Naive thymus-derived CD4-positive, alpha-beta T cell (primary cell): ENCODE measurements at regions of chr5 and their contacts with region 1.

Region 1: DNA sequence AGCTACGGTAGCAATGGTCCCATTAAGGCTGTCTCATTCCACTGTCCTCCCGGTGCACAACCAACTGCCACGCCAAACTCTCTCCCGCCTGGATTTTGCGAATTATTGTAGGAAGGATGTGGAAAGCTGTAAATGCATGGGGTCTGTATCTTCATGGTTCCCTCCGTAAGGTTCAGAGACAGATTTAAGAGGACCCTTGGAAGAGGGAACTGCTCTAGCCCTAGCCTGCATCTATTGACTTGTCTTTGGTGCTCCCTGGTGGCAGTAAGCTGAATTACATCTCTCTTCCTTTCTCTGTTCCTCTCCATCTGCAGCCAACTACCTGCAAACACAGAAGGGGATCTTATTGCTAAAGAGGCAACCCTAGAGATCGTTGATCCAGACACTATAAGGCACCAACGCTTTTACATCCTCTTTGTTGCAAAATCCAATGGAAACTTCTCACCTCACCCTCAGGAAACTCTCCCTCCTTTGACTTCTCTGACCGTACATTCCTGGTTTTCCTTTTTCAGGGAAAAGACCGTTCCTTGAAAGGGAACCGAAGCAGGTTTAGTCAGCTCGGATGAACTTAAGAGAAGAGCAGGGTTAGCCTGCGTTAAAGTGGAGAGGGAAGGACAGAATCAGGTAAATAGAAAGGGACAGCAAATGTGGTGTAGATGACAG is 11.9 kb downstream of the CAPSL start:
- DNase-seq: peak; percentile 29 to 80 (median 73)
- ATAC-seq: peak; percentile 70
- H3K4me3 ChIP-seq: no peak overlapping the region
- H3K4me3 Mint-ChIP-seq: peak overlapping the region; percentile 35 to 87 (median 58)
- H3K27ac ChIP-seq: no peak overlapping the region
- H3K27ac Mint-ChIP-seq: peak overlapping the region in 3 of 9 donors; percentile 1 to 60 (median 7)
- H3K4me1 ChIP-seq: peaks cover 10 to 14% of the 10 kb centered on the region in 2 donors
- H3K4me1 Mint-ChIP-seq: peaks cover 18 to 49% (median 35%) of the 10 kb centered on the region in 7 donors
- H3K27me3 ChIP-seq: no peaks in the 10 kb centered on the region
- H3K27me3 Mint-ChIP-seq: peaks cover 0 to 13% (median 5%) of the 10 kb centered on the region in 5 donors

Region 2: DNA sequence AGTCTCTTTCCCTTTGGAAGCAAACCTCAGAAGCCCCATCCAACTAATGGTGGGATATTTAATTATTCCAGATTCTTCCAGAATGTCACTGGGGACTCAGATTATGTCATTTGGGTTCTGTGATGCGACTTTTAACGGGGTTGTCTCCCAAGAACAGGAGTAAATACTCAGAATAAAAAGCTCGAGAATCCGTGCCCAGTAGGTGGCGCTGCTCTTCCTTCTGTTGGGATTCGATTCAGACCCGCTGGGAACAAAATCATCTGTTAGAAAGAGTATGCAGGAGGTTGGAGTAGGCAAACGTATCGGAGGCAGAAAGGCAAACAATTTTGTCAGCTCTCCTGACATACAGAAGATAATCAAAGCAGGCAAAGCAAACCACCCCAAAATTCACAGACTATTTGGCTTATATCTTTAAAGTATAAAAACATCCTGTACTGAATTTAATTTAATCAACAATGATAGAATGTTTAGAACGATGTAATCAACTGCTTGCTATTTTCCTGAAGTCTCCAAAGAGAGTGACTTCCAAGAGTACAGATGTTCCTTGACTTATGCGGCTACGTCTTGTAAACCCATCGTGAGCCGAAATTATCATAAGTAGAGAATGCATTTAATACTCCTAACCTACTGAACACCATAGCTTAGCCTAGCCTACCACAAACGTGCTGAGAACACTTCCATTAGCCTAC is 1440.2 kb before region 1 on chr5:
- CTCF ChIA-PET with region 1: no interaction called
- POLR2A ChIA-PET with region 1: no interaction called
- intact Hi-C with region 1: loop called in 1 of 2 experiments (anchors 5 kb)
- DNase-seq: peak; percentile 10 to 61 (median 47)
- ATAC-seq: peak; percentile 63
- H3K4me3 ChIP-seq: no peak overlapping the region
- H3K4me3 Mint-ChIP-seq: no peak overlapping the region
- H3K27ac ChIP-seq: no peak overlapping the region
- H3K27ac Mint-ChIP-seq: no peak overlapping the region
- H3K4me1 ChIP-seq: no peaks in the 10 kb centered on the region
- H3K4me1 Mint-ChIP-seq: peaks cover 0 to 6% (median 4%) of the 10 kb centered on the region in 7 donors
- H3K27me3 ChIP-seq: no peaks in the 10 kb centered on the region
- H3K27me3 Mint-ChIP-seq: peaks cover 15 to 37% (median 33%) of the 10 kb centered on the region in 5 donors

Region 3: GRCh38 chr5:35229076-35230037 is 697.2 kb before region 1 on chr5:
- CTCF ChIA-PET with region 1: no interaction called
- POLR2A ChIA-PET with region 1: no interaction called
- intact Hi-C with region 1: loop called in 1 of 2 experiments (anchors 5 kb)
- DNase-seq: peak in 1 of 9 donors; percentile 11
- ATAC-seq: peak; percentile 29
- H3K4me3 ChIP-seq: no peak overlapping the region
- H3K4me3 Mint-ChIP-seq: peak overlapping the region; percentile 39 to 83 (median 76)
- H3K27ac ChIP-seq: no peak overlapping the region
- H3K27ac Mint-ChIP-seq: peak overlapping the region in 1 of 9 donors; percentile 20
- H3K4me1 ChIP-seq: no peaks in the 10 kb centered on the region
- H3K4me1 Mint-ChIP-seq: peaks cover 2 to 20% (median 14%) of the 10 kb centered on the region in 7 donors
- H3K27me3 ChIP-seq: peaks cover 5 to 10% of the 10 kb centered on the region in 2 donors
- H3K27me3 Mint-ChIP-seq: peaks cover 71 to 84% (median 81%) of the 10 kb centered on the region in 5 donors

Region 4: GRCh38 chr5:35617435-35618303 is 308.9 kb before region 1 on chr5 and contains the start of gene SPEF2:
- CTCF ChIA-PET with region 1: interaction called, 23 read pairs
- POLR2A ChIA-PET with region 1: no interaction called
- intact Hi-C with region 1: loop called (anchors 1 kb)
- DNase-seq: peak; percentile 57 to 76 (median 71)
- ATAC-seq: peak; percentile 95
- H3K4me3 ChIP-seq: peak within 1 kb of the TSS; percentile 95
- H3K4me3 Mint-ChIP-seq: peak within 1 kb of the TSS; percentile 91 to 96 (median 94)
- H3K27ac ChIP-seq: peak within 1 kb of the TSS; percentile 27
- H3K27ac Mint-ChIP-seq: peak within 1 kb of the TSS; percentile 79 to 96 (median 89)
- H3K4me1 ChIP-seq: peaks cover 4 to 12% of the 10 kb centered on the region in 2 donors
- H3K4me1 Mint-ChIP-seq: peaks cover 14 to 34% (median 26%) of the 10 kb centered on the region in 7 donors
- H3K27me3 ChIP-seq: no peaks in the 10 kb centered on the region
- H3K27me3 Mint-ChIP-seq: no peaks in the 10 kb centered on the region
- total RNA-seq, gene SPEF2: 7.1 to 13.5 (median 9.9) TPM

Region 5: DNA sequence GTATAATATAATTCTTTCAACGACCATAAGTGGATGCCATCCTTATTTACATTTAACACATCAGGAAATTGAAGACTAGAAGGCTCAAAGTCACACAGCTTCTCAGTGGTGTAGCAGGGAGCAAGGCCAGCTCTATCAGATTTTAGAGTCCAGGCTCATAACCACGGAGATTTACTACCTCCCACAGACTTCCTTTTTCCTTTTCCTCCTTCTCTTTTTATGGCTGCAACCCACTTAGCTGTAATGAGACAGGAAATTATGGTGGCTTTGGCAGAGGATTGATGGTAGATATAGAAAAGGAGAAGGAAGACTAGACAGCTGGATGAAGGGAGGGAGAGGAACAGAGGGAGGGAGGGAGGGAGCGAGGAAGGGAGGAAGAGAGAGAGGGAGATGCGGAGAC is 261.4 kb before region 1 on chr5:
- CTCF ChIA-PET with region 1: interaction called, 78 read pairs
- POLR2A ChIA-PET with region 1: no interaction called
- intact Hi-C with region 1: no loop called
- DNase-seq: no peak
- ATAC-seq: peak; percentile 36
- H3K4me3 ChIP-seq: no peak overlapping the region
- H3K4me3 Mint-ChIP-seq: peak overlapping the region in 9 of 10 donors; percentile 3 to 52 (median 37)
- H3K27ac ChIP-seq: no peak overlapping the region
- H3K27ac Mint-ChIP-seq: peak overlapping the region in 8 of 9 donors; percentile 4 to 88 (median 52)
- H3K4me1 ChIP-seq: peaks cover 1 to 23% of the 10 kb centered on the region in 2 donors
- H3K4me1 Mint-ChIP-seq: peaks cover 17 to 70% (median 46%) of the 10 kb centered on the region in 7 donors
- H3K27me3 ChIP-seq: no peaks in the 10 kb centered on the region
- H3K27me3 Mint-ChIP-seq: no peaks in the 10 kb centered on the region

Region 6: GRCh38 chr5:35822511-35822910 is 104.0 kb before region 1 on chr5:
- CTCF ChIA-PET with region 1: interaction called, 6 read pairs
- POLR2A ChIA-PET with region 1: interaction called, 3 read pairs
- intact Hi-C with region 1: loop called in 1 of 2 experiments (anchors 2 kb)
- DNase-seq: peak in 7 of 9 donors; percentile 49 to 83 (median 76)
- ATAC-seq: peak; percentile 82
- H3K4me3 ChIP-seq: peak overlapping the region; percentile 7
- H3K4me3 Mint-ChIP-seq: peak overlapping the region; percentile 38 to 75 (median 70)
- H3K27ac ChIP-seq: peak overlapping the region; percentile 62
- H3K27ac Mint-ChIP-seq: peak overlapping the region; percentile 84 to 98 (median 95)
- H3K4me1 ChIP-seq: peaks cover 91 to 92% of the 10 kb centered on the region in 2 donors
- H3K4me1 Mint-ChIP-seq: peaks cover 55 to 94% (median 88%) of the 10 kb centered on the region in 7 donors
- H3K27me3 ChIP-seq: no peaks in the 10 kb centered on the region
- H3K27me3 Mint-ChIP-seq: no peaks in the 10 kb centered on the region

Region 7: GRCh38 chr5:35902046-35902676 is 24.4 kb before region 1 on chr5:
- CTCF ChIA-PET with region 1: interaction called, 4 read pairs
- POLR2A ChIA-PET with region 1: no interaction called
- intact Hi-C with region 1: loop called (anchors 1 kb)
- DNase-seq: no peak
- ATAC-seq: peak; percentile 48
- H3K4me3 ChIP-seq: no peak overlapping the region
- H3K4me3 Mint-ChIP-seq: peak overlapping the region in 1 of 10 donors; percentile 57
- H3K27ac ChIP-seq: no peak overlapping the region
- H3K27ac Mint-ChIP-seq: peak overlapping the region in 2 of 9 donors; percentile 25 to 40
- H3K4me1 ChIP-seq: peaks cover 10 to 12% of the 10 kb centered on the region in 2 donors
- H3K4me1 Mint-ChIP-seq: peaks cover 28 to 76% (median 63%) of the 10 kb centered on the region in 7 donors
- H3K27me3 ChIP-seq: no peaks in the 10 kb centered on the region
- H3K27me3 Mint-ChIP-seq: no peaks in the 10 kb centered on the region

Region 8: DNA sequence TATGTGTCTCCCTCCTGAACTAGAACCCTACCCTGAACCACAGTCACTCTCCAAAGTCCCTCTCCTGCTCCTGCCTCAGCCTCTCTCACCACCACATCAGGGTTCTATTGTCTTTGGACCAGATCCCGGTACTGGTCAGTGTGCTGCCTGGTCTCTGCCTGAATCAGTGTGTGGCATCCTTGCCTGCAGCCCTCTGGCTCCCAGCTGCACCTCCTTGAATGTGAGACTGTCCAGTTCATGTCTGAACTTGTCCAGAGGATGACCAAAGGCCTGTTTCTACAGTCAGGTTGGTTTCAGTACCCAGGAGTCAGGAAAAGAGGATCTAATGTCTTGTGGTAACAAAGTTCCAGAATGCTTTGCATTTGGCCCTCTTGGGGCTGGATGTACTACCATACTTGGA is 452.0 kb after region 1 on chr5:
- CTCF ChIA-PET with region 1: no interaction called
- POLR2A ChIA-PET with region 1: no interaction called
- intact Hi-C with region 1: no loop called
- DNase-seq: no peak
- ATAC-seq: no peak
- H3K4me3 ChIP-seq: no peak overlapping the region
- H3K4me3 Mint-ChIP-seq: no peak overlapping the region
- H3K27ac ChIP-seq: no peak overlapping the region
- H3K27ac Mint-ChIP-seq: peak overlapping the region in 1 of 9 donors; percentile 12
- H3K4me1 ChIP-seq: no peaks in the 10 kb centered on the region
- H3K4me1 Mint-ChIP-seq: no peaks in the 10 kb centered on the region
- H3K27me3 ChIP-seq: no peaks in the 10 kb centered on the region
- H3K27me3 Mint-ChIP-seq: peaks cover 0 to 15% (median 7%) of the 10 kb centered on the region in 5 donors